Esophagus muscularis mucosa (tissue), 4 donors: ENCODE measurements at regions of chr3 and their contacts with region 1.

Region 1: GRCh38 chr3:187745201-187746058 is at the start of gene BCL6:
- DNase-seq: peak; percentile 99
- H3K4me3 ChIP-seq: peak within 1 kb of the TSS; percentile 69 to 81 (median 76)
- H3K27ac ChIP-seq: peak within 1 kb of the TSS; percentile 94 to 99 (median 98)
- H3K4me1 ChIP-seq: peaks cover 13 to 69% (median 48%) of the 10 kb centered on the region in 4 donors
- H3K27me3 ChIP-seq: no peaks in the 10 kb centered on the region
- CTCF ChIP-seq: no peak
- EP300 ChIP-seq: peak; percentile 96
- POLR2A ChIP-seq: peak; percentile 98
- total RNA-seq, gene BCL6: 86.0 to 161 (median 111) TPM

Region 2: DNA sequence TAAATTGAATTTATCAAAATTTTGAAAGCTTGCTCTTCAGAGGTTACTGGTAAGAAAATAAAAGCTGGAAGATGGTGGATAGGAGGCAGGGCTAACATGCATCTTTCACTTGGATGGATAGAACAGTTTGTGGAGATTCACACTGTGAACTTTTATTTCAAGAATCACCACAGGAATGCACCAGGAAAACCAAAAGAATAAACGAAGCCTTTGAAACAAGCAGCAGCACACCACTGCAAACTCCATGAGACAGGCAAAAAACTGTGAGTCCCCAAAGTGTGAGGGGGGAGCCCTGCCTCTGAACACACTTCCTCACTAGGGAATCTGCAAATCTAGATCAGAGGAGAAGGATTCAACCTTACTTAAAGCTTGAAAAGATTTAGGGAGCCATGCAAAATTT is 255.1 kb before region 1 on chr3:
- intact Hi-C with region 1: no loop called
- DNase-seq: no peak
- H3K4me3 ChIP-seq: no peak overlapping the region
- H3K27ac ChIP-seq: no peak overlapping the region
- H3K4me1 ChIP-seq: no peaks in the 10 kb centered on the region
- H3K27me3 ChIP-seq: no peaks in the 10 kb centered on the region
- CTCF ChIP-seq: no peak
- EP300 ChIP-seq: no peak
- POLR2A ChIP-seq: no peak

Region 3: GRCh38 chr3:188031121-188031520 is 285.7 kb after region 1 on chr3:
- intact Hi-C with region 1: loop called (anchors 5 kb)
- DNase-seq: no peak
- H3K4me3 ChIP-seq: no peak overlapping the region
- H3K27ac ChIP-seq: no peak overlapping the region
- H3K4me1 ChIP-seq: peaks cover 0 to 2% (median 0%) of the 10 kb centered on the region in 4 donors
- H3K27me3 ChIP-seq: no peaks in the 10 kb centered on the region
- CTCF ChIP-seq: no peak
- EP300 ChIP-seq: no peak
- POLR2A ChIP-seq: no peak

Region 4: DNA sequence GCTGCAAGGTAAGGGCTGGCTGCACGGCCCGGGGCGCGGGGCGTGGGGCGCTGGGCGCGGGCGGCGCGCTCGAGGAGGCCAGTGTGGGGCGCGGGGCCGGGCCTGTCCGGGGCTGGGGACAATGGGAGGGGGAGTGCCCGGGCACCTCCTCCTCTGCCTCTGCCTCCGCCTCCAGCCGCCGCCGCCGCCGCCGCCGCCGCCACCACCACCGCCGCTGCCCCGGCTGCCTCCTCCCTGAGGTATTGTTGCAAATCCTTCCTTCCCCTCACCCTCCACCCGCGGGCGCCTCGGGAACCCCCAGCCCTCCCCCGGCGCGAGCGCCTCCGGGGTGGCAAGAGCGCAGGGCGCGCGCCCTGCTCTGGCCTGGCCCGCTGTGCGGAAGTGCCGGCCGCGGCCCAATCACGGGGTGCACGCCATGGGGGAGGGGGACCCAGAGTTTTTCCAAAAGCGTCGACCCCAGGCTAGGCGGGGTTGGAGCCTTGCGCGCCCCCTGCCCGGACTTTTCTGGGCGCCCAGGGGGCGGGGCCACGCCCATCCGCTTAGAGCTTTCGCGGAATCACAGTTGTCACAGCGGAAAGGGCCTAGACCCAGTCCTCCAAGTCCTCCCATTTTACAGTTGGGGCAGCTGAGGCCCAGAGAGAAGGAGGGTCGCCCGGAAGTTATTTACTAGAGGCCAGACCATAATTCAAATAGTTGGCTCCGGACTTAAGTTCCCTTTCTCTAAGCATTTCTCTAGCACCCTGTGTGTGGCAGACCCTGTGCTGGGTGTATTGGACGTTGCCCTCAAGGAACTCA is 408.8 kb after region 1 on chr3 and contains the start of gene LPP:
- intact Hi-C with region 1: loop called (anchors 2 kb)
- DNase-seq: peak; percentile 93
- H3K4me3 ChIP-seq: peak within 1 kb of the TSS; percentile 84 to 92 (median 90)
- H3K27ac ChIP-seq: peak within 1 kb of the TSS; percentile 98 to 99 (median 99)
- H3K4me1 ChIP-seq: peaks cover 22 to 68% (median 57%) of the 10 kb centered on the region in 4 donors
- H3K27me3 ChIP-seq: no peaks in the 10 kb centered on the region
- CTCF ChIP-seq: peak in 1 of 3 experiments; percentile 10
- EP300 ChIP-seq: no peak
- POLR2A ChIP-seq: peak; percentile 39
- total RNA-seq, gene LPP: 1,872 to 3,079 (median 2,300) TPM

Region 5: GRCh38 chr3:188270423-188270972 is 525.1 kb after region 1 on chr3:
- intact Hi-C with region 1: loop called (anchors 5 kb)
- DNase-seq: no peak
- H3K4me3 ChIP-seq: peak overlapping the region in 1 of 4 donors; percentile 11
- H3K27ac ChIP-seq: peak overlapping the region; percentile 90 to 98 (median 93)
- H3K4me1 ChIP-seq: peaks cover 73 to 100% (median 97%) of the 10 kb centered on the region in 4 donors
- H3K27me3 ChIP-seq: no peaks in the 10 kb centered on the region
- CTCF ChIP-seq: peak in 2 of 3 experiments; percentile 43 to 65
- EP300 ChIP-seq: peak; percentile 97
- POLR2A ChIP-seq: no peak

Region 6: DNA sequence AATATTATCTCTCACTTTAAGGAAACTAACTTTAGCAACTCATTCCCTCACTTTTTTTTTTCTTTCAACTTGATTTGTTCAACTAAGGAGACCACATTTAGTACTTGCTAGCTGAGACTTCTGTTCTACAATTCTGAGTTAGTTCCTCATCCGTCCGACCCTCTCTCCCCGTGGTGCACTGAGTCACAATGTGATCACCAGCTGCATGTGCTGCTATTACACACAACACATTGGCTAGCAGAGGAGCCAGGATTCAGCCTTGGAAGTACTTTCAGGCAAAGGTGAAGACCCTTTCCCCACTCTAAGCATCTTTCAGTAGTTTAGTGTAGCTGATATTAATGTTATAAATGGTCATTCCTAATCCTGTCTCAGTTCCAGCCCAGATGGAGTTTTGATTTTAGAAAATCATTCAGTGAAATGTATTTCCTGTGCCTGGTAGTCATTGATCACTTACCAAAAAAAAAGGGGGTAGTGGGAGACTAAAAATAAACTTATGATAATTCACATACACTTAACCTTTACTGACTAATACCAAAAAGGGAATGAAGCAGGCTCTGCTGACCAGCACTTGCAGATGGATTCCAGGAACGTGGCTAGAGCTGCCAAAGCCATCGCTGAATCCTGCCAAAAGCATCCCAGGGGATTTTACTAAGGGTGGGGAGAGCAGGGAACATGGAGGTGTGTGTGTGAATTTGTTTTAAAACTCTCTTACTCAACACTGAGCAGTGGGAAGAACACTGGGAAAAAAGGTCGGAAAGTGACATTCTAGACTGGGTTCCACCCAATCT is 833.3 kb after region 1 on chr3:
- intact Hi-C with region 1: loop called (anchors 10 kb)
- DNase-seq: peak; percentile 93
- H3K4me3 ChIP-seq: no peak overlapping the region
- H3K27ac ChIP-seq: peak overlapping the region; percentile 77 to 80 (median 78)
- H3K4me1 ChIP-seq: peaks cover 33 to 100% (median 91%) of the 10 kb centered on the region in 4 donors
- H3K27me3 ChIP-seq: no peaks in the 10 kb centered on the region
- CTCF ChIP-seq: no peak
- EP300 ChIP-seq: no peak
- POLR2A ChIP-seq: no peak